PC-3 (cell line): ENCODE measurements at regions of chr5 and their contacts with region 1.

Region 1: GRCh38 chr5:91419571-91420537 is 36.7 kb upstream of the ARRDC3 start:
- DNase-seq: peak; percentile 88
- ATAC-seq: peak; percentile 48
- H3K4me3 ChIP-seq: no peak overlapping the region
- H3K27ac ChIP-seq: no peak overlapping the region
- H3K4me1 ChIP-seq: no peaks in the 10 kb centered on the region
- H3K27me3 ChIP-seq: no peaks in the 10 kb centered on the region
- CTCF ChIP-seq: peak; percentile 85

Region 2: GRCh38 chr5:90802474-90803317 is 617.2 kb before region 1 on chr5:
- CTCF ChIA-PET with region 1: no interaction called
- POLR2A ChIA-PET with region 1: no interaction called
- intact Hi-C with region 1: loop called (anchors 10 kb)
- DNase-seq: peak; percentile 82
- ATAC-seq: peak; percentile 92
- H3K4me3 ChIP-seq: no peak overlapping the region
- H3K27ac ChIP-seq: no peak overlapping the region
- H3K4me1 ChIP-seq: no peaks in the 10 kb centered on the region
- H3K27me3 ChIP-seq: no peaks in the 10 kb centered on the region
- CTCF ChIP-seq: peak; percentile 81

Region 3: DNA sequence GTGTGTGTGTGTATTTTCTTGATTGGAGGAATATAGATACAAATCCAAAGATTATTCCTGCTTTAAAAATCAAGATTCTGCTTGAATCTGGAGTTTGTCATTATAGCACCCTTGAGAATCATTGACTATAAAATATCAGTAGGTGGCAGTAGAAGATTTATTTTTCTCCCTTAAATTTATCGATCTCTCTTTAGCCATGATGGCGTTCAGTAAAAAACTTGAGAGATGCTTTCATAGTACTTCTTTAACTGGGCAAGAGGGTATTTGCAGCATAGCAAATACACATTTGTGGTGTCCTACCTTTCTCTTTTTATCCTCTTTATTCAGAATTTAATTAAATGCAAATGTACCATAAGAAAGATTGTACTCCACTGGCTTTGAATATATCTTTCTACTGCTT is 553.5 kb before region 1 on chr5:
- CTCF ChIA-PET with region 1: interaction called, 3 read pairs
- POLR2A ChIA-PET with region 1: interaction called, 3 read pairs
- intact Hi-C with region 1: loop called (anchors 2 kb)
- DNase-seq: peak; percentile 65
- ATAC-seq: peak; percentile 71
- H3K4me3 ChIP-seq: no peak overlapping the region
- H3K27ac ChIP-seq: no peak overlapping the region
- H3K4me1 ChIP-seq: 0 out of 2 replicates have a peak, but pooled peaks cover 4% of the 10 kb centered on the region
- H3K27me3 ChIP-seq: no peaks in the 10 kb centered on the region
- CTCF ChIP-seq: peak; percentile 77

Region 4: DNA sequence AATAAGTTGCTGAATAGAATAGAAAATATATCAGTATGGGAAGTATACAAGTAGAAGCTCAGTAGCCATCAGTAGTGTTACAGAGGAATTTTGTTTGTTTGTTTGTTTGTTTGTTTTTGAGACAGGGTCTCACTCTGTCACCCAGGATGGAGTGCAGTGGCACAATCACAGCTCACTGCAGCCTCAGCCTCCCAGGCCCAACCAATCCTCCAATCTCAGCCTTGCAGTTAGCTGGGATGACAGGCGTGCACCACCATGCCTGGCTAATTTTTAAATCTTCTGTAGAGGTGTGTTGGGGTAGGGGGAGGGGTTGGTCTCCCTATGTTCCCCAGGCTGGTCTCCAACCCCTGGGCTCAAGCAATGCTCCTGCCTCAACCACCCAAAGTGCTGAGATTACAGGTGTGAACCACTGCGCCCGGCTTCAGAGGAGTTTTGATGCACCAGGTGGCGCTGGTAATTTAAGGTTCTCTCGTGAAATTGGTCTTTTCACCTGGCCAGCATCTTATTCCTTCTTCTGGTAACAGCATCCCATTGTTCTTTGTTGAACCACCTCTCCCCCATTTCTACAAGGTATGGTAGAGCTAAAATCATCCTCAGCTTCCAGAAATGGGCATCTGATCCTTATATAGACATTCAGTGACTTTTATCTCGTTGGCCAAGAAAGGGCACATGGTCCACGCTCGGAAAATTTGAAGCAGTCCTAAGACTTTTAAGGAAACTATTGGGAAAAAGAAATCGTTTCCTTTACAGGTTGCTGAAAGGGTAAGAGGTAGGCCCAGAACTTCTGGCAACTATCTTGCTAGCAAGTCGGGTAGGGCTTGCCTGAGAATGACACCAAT is 193.8 kb before region 1 on chr5:
- CTCF ChIA-PET with region 1: no interaction called
- POLR2A ChIA-PET with region 1: no interaction called
- intact Hi-C with region 1: loop called (anchors 1 kb)
- DNase-seq: peak; percentile 66
- ATAC-seq: peak; percentile 78
- H3K4me3 ChIP-seq: no peak overlapping the region
- H3K27ac ChIP-seq: no peak overlapping the region
- H3K4me1 ChIP-seq: no peaks in the 10 kb centered on the region
- H3K27me3 ChIP-seq: no peaks in the 10 kb centered on the region
- CTCF ChIP-seq: peak; percentile 77

Region 5: GRCh38 chr5:91329283-91329682 is 90.6 kb before region 1 on chr5:
- CTCF ChIA-PET with region 1: no interaction called
- POLR2A ChIA-PET with region 1: no interaction called
- intact Hi-C with region 1: no loop called
- DNase-seq: no peak
- ATAC-seq: no peak
- H3K4me3 ChIP-seq: no peak overlapping the region
- H3K27ac ChIP-seq: no peak overlapping the region
- H3K4me1 ChIP-seq: peaks cover 16% of the 10 kb centered on the region
- H3K27me3 ChIP-seq: no peaks in the 10 kb centered on the region
- CTCF ChIP-seq: no peak

Region 6: DNA sequence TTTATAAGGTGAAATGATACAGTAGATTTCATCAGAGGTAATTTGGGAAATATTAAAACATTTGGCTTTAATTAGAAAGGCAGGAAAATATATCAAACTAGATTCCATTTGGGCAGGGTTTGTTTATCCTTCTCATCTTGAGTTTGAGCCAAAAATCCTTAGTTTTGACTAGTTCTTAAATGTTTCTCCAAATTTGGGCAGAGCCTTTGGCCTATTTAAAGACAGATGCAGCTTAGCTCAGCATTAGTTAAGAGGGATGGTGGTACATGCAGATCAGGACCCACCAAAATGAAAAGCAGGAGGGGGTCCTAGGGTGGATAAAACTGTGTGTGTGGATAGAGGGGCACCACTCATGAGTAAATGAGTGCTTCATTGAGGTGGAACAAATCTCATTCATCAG is 16.4 kb before region 1 on chr5:
- CTCF ChIA-PET with region 1: interaction called, 10 read pairs
- POLR2A ChIA-PET with region 1: interaction called, 3 read pairs
- intact Hi-C with region 1: no loop called
- DNase-seq: no peak
- ATAC-seq: no peak
- H3K4me3 ChIP-seq: no peak overlapping the region
- H3K27ac ChIP-seq: no peak overlapping the region
- H3K4me1 ChIP-seq: peaks cover 5% of the 10 kb centered on the region
- H3K27me3 ChIP-seq: no peaks in the 10 kb centered on the region
- CTCF ChIP-seq: no peak

Region 7: GRCh38 chr5:92017786-92018185 is 597.9 kb after region 1 on chr5:
- CTCF ChIA-PET with region 1: no interaction called
- POLR2A ChIA-PET with region 1: no interaction called
- intact Hi-C with region 1: no loop called
- DNase-seq: peak; percentile 95
- ATAC-seq: peak; percentile 98
- H3K4me3 ChIP-seq: no peak overlapping the region
- H3K27ac ChIP-seq: peak overlapping the region; percentile 55
- H3K4me1 ChIP-seq: peaks cover 32% of the 10 kb centered on the region
- H3K27me3 ChIP-seq: no peaks in the 10 kb centered on the region
- CTCF ChIP-seq: no peak